ENCODE measurements at regions of chr21 and their contacts with region 1.

Region 1: DNA sequence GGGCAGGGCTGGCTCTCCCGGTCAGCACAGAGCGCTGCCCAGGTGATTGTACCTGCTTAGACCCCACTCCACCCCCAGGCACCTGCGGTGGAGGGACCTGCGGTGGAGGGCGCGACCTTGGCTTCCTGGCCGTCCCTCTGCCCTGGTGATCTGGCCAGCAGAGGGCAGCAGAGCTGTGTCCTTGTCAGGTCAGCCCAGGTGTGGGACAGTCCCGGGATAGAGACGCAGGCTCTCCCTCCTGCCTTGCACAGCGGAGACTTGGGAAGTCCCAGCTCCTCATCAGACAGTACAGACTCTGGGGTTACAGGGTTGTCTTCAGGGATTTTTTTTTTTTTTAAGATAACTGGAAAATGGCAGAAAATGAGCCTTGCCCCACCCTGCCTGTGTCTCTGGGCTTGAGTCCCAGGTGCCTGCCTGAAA is 10.0 kb downstream of the SLX9 start:
- DNase-seq: peak; percentile 82 to 88 (median 84)
- ATAC-seq: peak; percentile 97
- H3K4me3 ChIP-seq: no peak overlapping the region
- H3K27ac ChIP-seq: no peak overlapping the region
- H3K4me1 ChIP-seq: peaks cover 0 to 71% of the 10 kb centered on the region in 2 experiments; a peak in 2 of 5 replicates
- H3K27me3 ChIP-seq: no peaks in the 10 kb centered on the region
- CTCF ChIP-seq: peak; percentile 90 to 97 (median 93)
- EP300 ChIP-seq: no peak
- POLR2A ChIP-seq: no peak
- RAD21 ChIP-seq: peak; percentile 83 to 91

Region 2: DNA sequence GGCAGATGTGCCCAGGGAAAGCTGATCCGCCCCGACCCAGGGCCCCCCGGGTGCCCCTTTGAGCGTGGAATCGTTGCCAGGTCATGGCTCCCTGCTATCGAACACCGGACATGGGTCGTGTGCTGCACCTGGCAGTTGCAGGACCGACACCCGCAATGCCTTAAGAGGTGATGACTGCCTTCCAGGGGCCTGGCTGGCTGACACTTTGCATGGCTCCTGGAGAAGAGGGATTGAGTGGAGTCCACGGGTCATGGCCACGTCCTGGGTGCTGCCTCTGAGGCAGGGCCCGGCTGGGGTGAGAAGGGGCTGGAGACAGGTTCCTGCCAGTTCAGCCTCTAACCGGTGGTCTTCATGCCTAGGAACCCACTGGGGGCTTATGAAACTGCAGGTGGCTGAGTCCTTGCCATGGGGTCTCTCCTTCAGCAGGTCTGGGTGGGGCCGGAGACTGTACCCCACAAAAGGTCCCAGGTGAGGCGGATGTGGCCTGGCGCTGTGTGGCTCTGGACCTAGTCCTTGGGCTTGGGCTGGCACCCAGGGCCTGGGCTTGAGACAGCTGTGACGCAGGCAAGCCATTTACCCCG is 16.1 kb before region 1 on chr21:
- CTCF ChIA-PET with region 1: no interaction called
- POLR2A ChIA-PET with region 1: interaction called, 14 read pairs
- in situ Hi-C with region 1: no loop called
- intact Hi-C with region 1: no loop called
- DNase-seq: no peak
- ATAC-seq: no peak
- H3K4me3 ChIP-seq: no peak overlapping the region
- H3K27ac ChIP-seq: no peak overlapping the region
- H3K4me1 ChIP-seq: peaks cover under 1 to 32% of the 10 kb centered on the region in 2 experiments; a peak in 3 of 5 replicates
- H3K27me3 ChIP-seq: peaks cover 15 to 27% of the 10 kb centered on the region in 2 experiments
- CTCF ChIP-seq: no peak
- EP300 ChIP-seq: no peak
- POLR2A ChIP-seq: no peak
- RAD21 ChIP-seq: no peak

Region 3: DNA sequence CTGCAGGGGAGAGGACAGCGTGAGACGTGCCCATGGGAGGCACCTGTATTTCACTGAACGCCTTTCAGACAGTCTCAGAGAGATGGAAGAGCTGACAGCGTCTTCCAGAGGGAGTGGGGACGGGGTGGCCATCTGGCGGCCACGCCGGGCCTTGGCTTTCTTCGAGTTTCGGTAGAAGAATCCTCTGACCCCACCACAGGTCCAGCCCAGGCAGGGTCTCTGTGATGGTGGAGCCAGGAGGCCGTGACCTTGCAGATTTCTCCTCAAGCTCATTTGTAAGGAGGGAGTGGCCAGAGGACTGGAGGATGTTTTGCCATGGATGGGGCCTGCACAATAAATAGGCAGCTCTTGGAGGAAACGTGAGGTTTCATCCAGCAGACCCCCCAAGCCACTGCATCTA is 77.0 kb after region 1 on chr21:
- CTCF ChIA-PET with region 1: interaction called, 5 read pairs
- POLR2A ChIA-PET with region 1: no interaction called
- in situ Hi-C with region 1: no loop called
- intact Hi-C with region 1: loop called (anchors 2 kb)
- DNase-seq: peak in 3 of 4 experiments; percentile 48 to 70 (median 52)
- ATAC-seq: peak; percentile 84
- H3K4me3 ChIP-seq: no peak overlapping the region
- H3K27ac ChIP-seq: no peak overlapping the region
- H3K4me1 ChIP-seq: peaks cover 0 to 21% of the 10 kb centered on the region in 2 experiments; a peak in 2 of 5 replicates
- H3K27me3 ChIP-seq: peaks cover 39 to 66% of the 10 kb centered on the region in 2 experiments
- CTCF ChIP-seq: peak; percentile 52 to 62 (median 57)
- EP300 ChIP-seq: no peak
- POLR2A ChIP-seq: no peak
- RAD21 ChIP-seq: peak in 1 of 2 experiments; percentile 69; a peak in 2 of 4 replicates

Region 4: DNA sequence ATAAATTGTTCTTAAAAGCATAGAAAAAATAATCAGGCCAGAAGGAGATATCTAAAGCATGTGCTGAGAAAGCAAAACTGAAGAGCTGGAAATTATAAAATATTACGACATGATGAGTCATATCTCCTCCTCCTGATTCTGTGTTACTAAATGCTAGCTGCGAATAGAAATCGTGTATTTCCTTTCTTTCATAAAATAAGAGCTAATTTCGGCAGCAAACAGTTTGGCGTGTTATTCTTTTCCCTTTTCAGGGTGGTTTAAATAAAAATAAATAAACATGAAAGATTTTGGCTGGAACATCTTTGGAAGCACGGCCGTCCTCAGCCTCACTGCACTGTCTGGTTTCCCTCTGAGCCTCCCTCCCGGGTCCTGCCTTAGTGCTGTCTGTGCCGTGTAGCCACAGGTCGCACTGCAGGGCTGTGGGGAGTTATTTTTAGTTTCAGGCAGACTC is 180.6 kb after region 1 on chr21:
- CTCF ChIA-PET with region 1: interaction called, 51 read pairs
- POLR2A ChIA-PET with region 1: interaction called, 3 read pairs
- in situ Hi-C with region 1: loop called (anchors 5 kb)
- intact Hi-C with region 1: no loop called
- DNase-seq: peak in 1 of 4 experiments; percentile 47
- ATAC-seq: peak; percentile 76
- H3K4me3 ChIP-seq: no peak overlapping the region
- H3K27ac ChIP-seq: 0 out of 3 replicates have a peak overlapping the region, but pooled peaks have one; percentile 13
- H3K4me1 ChIP-seq: peaks cover 5 to 12% of the 10 kb centered on the region in 2 experiments
- H3K27me3 ChIP-seq: no peaks in the 10 kb centered on the region
- CTCF ChIP-seq: no peak
- EP300 ChIP-seq: no peak
- POLR2A ChIP-seq: no peak
- RAD21 ChIP-seq: no peak

Region 5: DNA sequence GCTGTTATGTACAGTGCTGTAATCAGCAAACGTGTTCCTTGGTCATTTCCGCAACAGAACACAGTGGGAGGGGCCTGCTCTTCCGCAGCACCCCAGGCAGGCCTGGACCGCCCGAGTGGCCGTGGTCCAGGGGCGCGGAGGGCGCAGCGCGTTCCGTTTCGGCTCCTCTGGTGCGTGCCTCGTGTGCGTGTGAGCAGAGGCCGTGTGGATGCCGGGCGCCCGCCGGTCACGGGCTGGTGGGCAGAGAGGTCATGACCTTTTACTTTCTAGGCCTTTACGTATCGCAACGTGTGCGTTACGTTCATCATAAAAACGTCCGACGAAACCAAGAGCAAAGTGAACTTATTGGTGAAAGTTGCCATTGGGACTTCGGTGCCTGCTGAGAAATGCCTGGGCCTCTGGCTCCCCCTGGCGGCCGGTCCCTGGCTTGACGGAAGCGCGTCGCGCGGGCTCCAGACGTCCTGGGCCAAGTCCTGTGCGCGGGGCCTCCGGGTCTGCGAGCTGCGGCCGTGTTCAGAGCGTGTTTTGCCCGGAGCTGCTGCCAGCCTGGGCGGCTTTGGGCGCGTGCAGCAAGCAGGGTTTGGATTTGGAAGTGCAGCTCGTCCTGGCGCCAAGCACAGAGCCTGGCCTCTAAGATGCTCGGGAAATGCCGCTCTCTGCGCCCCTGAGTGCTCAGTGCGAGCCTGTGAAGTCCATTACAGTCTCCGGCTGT is 489.5 kb after region 1 on chr21:
- CTCF ChIA-PET with region 1: no interaction called
- POLR2A ChIA-PET with region 1: no interaction called
- in situ Hi-C with region 1: loop called (anchors 10 kb)
- intact Hi-C with region 1: no loop called
- DNase-seq: peak; percentile 90 to 91 (median 90)
- ATAC-seq: peak; percentile 98
- H3K4me3 ChIP-seq: no peak overlapping the region
- H3K27ac ChIP-seq: peak overlapping the region; percentile 55; the same call in 2 of the 3 replicates
- H3K4me1 ChIP-seq: peaks cover 10 to 61% of the 10 kb centered on the region in 2 experiments; a peak in 4 of 5 replicates
- H3K27me3 ChIP-seq: peaks cover 0 to 7% of the 10 kb centered on the region in 2 experiments; a peak in 2 of 5 replicates
- CTCF ChIP-seq: peak; percentile 97 to 98 (median 98)
- EP300 ChIP-seq: no peak
- POLR2A ChIP-seq: no peak
- RAD21 ChIP-seq: peak; percentile 100

Region 6: GRCh38 chr21:45846373-45847160 is 896.8 kb after region 1 on chr21:
- CTCF ChIA-PET with region 1: no interaction called
- POLR2A ChIA-PET with region 1: no interaction called
- in situ Hi-C with region 1: loop called (anchors 25 kb)
- intact Hi-C with region 1: no loop called
- DNase-seq: no peak
- ATAC-seq: no peak
- H3K4me3 ChIP-seq: no peak overlapping the region
- H3K27ac ChIP-seq: no peak overlapping the region
- H3K4me1 ChIP-seq: no peaks in the 10 kb centered on the region
- H3K27me3 ChIP-seq: peaks cover 11 to 36% of the 10 kb centered on the region in 2 experiments; a peak in 4 of 5 replicates
- CTCF ChIP-seq: no peak
- EP300 ChIP-seq: no peak
- POLR2A ChIP-seq: no peak
- RAD21 ChIP-seq: no peak